ENCODE measurements at regions of chr7 and their contacts with region 1.

Region 1: GRCh38 chr7:97872025-97872669 is at the start of gene ASNS:
- DNase-seq: peak; percentile 96
- H3K4me3 Mint-ChIP-seq: peak within 1 kb of the TSS; percentile 86
- H3K27ac Mint-ChIP-seq: peak within 1 kb of the TSS; percentile 83
- H3K4me1 Mint-ChIP-seq: peaks cover 12% of the 10 kb centered on the region
- H3K27me3 Mint-ChIP-seq: no peaks in the 10 kb centered on the region
- CTCF ChIP-seq: no peak
- total RNA-seq, gene ASNS: 191 and 303 TPM in 2 replicates

Region 2: GRCh38 chr7:97971990-97972943 is 100.1 kb after region 1 on chr7:
- CTCF ChIA-PET with region 1: no interaction called
- POLR2A ChIA-PET with region 1: interaction called, 7 read pairs
- intact Hi-C with region 1: loop called (anchors 2 kb)
- DNase-seq: peak; percentile 79
- H3K4me3 Mint-ChIP-seq: peak overlapping the region; percentile 86
- H3K27ac Mint-ChIP-seq: peak overlapping the region; percentile 95
- H3K4me1 Mint-ChIP-seq: peaks cover 17% of the 10 kb centered on the region
- H3K27me3 Mint-ChIP-seq: no peaks in the 10 kb centered on the region
- CTCF ChIP-seq: no peak

Region 3: DNA sequence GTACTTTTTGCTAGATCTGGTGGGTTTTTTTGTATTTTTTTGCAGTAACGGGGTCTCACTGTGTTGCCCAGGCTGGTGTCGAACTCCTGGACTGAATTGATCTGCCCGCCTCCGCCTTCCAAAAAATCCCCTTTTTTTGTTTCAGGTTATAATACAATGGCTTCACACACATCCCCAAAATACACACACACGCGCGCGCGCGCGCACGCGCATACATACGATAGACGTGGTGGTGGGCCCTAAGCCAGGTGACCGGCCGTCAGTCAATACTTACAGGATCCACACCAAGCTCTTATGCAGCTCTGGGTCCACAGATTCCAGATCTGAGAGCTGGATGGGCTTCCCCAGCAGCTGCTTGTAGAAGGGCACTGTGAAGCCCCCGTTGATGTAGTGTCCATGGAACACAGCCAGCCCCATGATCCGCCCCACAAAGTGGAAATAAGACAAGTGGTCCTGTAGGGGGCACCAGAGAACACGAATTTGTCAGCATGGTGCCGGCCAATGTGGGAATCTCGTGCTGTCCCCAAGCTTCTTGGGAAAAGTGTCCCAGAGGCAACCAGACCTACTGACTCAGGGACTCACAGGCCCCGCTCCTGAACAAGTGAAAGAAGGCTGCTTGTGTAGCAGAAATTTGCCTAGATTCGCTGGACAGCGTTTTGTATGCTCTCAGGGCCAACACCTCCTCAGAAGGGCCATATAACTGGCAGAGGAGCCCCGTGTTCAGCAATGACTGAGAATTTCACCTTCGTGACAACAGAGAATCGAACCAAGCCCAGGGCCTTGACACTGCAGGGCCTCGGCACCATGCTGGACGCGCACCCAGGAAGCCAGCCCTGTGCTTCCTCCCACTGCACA is 1168.2 kb after region 1 on chr7:
- CTCF ChIA-PET with region 1: no interaction called
- POLR2A ChIA-PET with region 1: no interaction called
- intact Hi-C with region 1: no loop called
- DNase-seq: peak; percentile 90
- H3K4me3 Mint-ChIP-seq: no peak overlapping the region
- H3K27ac Mint-ChIP-seq: peak overlapping the region; percentile 27
- H3K4me1 Mint-ChIP-seq: no peaks in the 10 kb centered on the region
- H3K27me3 Mint-ChIP-seq: no peaks in the 10 kb centered on the region
- CTCF ChIP-seq: peak; percentile 68

Measured in MCF 10A (cell line).